Activated CD8-positive, alpha-beta T cell treated with anti-CD3 and anti-CD28 coated beads, Interleukin-2, amount 10 ng/mL, durations not matched to agents 7 days and 5 days (primary cell): ENCODE measurements at regions of chr17 and their contacts with region 1.

Region 1: DNA sequence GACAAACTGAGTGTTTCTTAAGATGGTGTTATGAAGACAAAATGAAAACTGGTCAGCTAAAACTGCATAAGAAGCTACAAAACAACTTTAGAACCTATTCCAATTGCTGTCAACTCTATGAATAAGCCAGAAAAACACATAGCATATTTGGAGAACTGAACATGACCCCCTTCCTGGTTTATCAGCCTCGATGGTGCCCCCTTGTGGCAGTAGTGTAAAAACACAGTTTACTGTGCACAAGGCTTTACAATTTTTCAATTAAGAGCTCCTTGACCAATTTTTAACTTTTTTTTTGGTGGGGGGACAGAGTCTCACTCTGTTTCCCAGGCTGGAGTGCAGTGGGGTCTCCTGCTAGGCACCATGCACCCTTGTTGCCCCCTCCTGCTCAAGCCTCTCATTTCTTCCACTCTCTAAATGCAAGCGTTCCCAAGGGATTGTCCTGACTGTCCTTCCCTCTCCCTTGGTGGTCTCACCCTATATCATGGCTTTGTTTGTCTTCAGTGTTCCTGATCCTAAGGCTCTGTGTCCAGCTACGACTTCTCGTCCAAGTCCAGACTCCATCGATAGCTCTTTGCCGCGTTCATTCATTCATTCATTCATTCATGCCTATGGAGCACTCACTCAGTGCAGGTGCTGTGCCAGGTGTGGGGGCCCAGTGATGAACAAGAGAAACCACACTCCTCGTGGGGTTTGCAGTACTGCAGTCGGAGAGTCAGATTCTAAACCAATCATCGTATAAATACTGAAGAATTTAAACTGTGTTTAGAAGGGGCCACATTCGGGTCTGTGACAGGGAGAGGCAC is 7.5 kb downstream of the EIF1 start:
- DNase-seq: peak; percentile 90
- ATAC-seq: no peak
- H3K4me3 Mint-ChIP-seq: no peak overlapping the region
- H3K27ac Mint-ChIP-seq: peak overlapping the region; percentile 67
- H3K4me1 Mint-ChIP-seq: peaks cover 32% of the 10 kb centered on the region
- H3K27me3 Mint-ChIP-seq: no peaks in the 10 kb centered on the region

Region 2: DNA sequence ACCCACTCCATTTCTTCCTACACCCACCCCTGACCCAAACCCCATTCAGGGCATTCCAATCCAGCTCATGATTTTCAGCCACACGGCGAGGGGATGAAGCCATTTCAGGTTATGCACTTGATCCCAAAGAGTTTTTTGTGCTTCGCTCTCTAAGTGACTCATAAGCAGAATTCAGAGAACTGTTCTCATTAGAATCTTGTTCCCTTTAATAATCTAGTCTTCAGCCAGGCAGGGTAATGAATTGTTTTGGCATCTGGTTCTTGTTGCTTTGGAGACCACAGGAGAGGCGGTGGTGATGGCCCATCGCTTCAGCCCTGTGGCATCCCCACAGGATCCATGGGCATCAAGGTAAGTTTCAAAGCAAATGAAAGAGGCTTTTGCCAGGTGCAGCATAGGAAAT is 294.0 kb before region 1 on chr17:
- CTCF ChIA-PET with region 1: no interaction called
- POLR2A ChIA-PET with region 1: no interaction called
- DNase-seq: no peak
- ATAC-seq: no peak
- H3K4me3 Mint-ChIP-seq: no peak overlapping the region
- H3K27ac Mint-ChIP-seq: peak overlapping the region; percentile 34
- H3K4me1 Mint-ChIP-seq: peaks cover 23% of the 10 kb centered on the region
- H3K27me3 Mint-ChIP-seq: no peaks in the 10 kb centered on the region

Region 3: GRCh38 chr17:41678907-41679739 is 17.0 kb before region 1 on chr17:
- CTCF ChIA-PET with region 1: interaction called, 147 read pairs
- POLR2A ChIA-PET with region 1: interaction called, 303 read pairs
- DNase-seq: peak; percentile 91
- ATAC-seq: peak; percentile 91
- H3K4me3 Mint-ChIP-seq: peak overlapping the region; percentile 84
- H3K27ac Mint-ChIP-seq: peak overlapping the region; percentile 94
- H3K4me1 Mint-ChIP-seq: peaks cover 62% of the 10 kb centered on the region
- H3K27me3 Mint-ChIP-seq: no peaks in the 10 kb centered on the region

Region 4: DNA sequence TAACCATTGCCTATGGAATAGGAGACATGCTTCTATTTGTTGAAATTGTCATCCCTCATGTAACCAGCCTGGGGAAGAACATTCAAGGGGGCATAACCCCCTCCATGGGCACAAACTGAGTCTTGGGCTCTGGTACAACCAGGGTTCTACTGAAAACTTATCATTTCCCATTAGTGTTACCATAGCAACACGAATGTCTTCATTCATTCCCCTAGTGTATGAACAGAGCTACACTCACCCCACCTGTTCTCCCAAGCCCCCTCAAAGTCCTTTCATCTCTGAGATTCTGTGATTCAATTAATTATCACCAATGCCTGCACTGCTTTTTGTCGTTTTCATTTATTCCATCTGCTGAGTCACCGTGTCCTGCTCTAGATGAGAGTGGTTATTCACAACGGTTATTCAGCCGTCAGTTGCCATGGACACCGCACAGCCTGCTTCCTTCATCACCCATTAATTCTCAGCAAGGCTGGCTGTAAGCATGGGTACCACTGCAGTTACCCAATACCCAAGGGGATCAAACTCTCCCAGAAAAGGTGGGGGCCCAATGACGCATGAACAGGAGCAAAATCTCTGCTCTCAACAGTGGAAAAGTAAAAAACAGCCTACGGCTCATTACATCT is 14.4 kb after region 1 on chr17:
- CTCF ChIA-PET with region 1: interaction called, 34 read pairs
- POLR2A ChIA-PET with region 1: no interaction called
- DNase-seq: no peak
- ATAC-seq: no peak
- H3K4me3 Mint-ChIP-seq: no peak overlapping the region
- H3K27ac Mint-ChIP-seq: no peak overlapping the region
- H3K4me1 Mint-ChIP-seq: peaks cover 4% of the 10 kb centered on the region
- H3K27me3 Mint-ChIP-seq: peaks cover 16% of the 10 kb centered on the region